Activated CD4-positive, alpha-beta T cell treated with anti-CD3 and anti-CD28 coated beads for 36 hours (primary cell): ENCODE measurements at regions of chr12 and their contacts with region 1.

Region 1: GRCh38 chr12:47742253-47742825 is 16.3 kb downstream of the RAPGEF3 start:
- DNase-seq: peak; percentile 88
- ATAC-seq: peak; percentile 59
- H3K4me3 Mint-ChIP-seq: no peak overlapping the region
- H3K27ac Mint-ChIP-seq: no peak overlapping the region
- H3K4me1 Mint-ChIP-seq: peaks cover 17% of the 10 kb centered on the region
- H3K27me3 Mint-ChIP-seq: peaks cover 2% of the 10 kb centered on the region

Region 2: DNA sequence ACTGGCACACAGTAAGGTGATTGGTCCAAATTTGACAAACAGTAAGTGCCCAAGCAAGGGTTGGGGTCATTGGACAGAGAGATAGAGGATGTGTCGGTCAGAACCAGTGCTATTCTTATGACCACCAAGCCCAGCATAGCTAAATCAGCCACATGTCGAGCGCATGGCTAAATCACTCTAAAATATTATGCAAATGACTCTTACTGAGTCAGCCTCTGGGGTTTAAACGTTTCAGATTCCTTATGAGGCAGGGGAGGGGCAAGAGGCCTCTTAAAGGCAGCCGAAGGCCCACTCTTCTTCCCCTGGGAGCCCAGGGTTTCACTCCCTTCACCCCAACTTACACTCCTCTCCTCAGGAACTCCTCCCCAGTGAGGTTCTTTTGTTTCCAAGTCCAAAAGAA is 16.4 kb before region 1 on chr12:
- CTCF ChIA-PET with region 1: interaction called, 63 read pairs
- POLR2A ChIA-PET with region 1: no interaction called
- intact Hi-C with region 1: no loop called
- DNase-seq: peak; percentile 28
- ATAC-seq: peak; percentile 79
- H3K4me3 Mint-ChIP-seq: no peak overlapping the region
- H3K27ac Mint-ChIP-seq: no peak overlapping the region
- H3K4me1 Mint-ChIP-seq: peaks cover 18% of the 10 kb centered on the region
- H3K27me3 Mint-ChIP-seq: no peaks in the 10 kb centered on the region

Region 3: GRCh38 chr12:47767216-47767724 is 24.9 kb after region 1 on chr12:
- CTCF ChIA-PET with region 1: interaction called, 449 read pairs
- POLR2A ChIA-PET with region 1: interaction called, 3 read pairs
- intact Hi-C with region 1: loop called (anchors 1 kb)
- DNase-seq: peak; percentile 88
- ATAC-seq: peak; percentile 89
- H3K4me3 Mint-ChIP-seq: no peak overlapping the region
- H3K27ac Mint-ChIP-seq: no peak overlapping the region
- H3K4me1 Mint-ChIP-seq: no peaks in the 10 kb centered on the region
- H3K27me3 Mint-ChIP-seq: peaks cover 4% of the 10 kb centered on the region

Region 4: GRCh38 chr12:47797441-47797840 is 55.1 kb after region 1 on chr12:
- CTCF ChIA-PET with region 1: interaction called, 16 read pairs
- POLR2A ChIA-PET with region 1: no interaction called
- intact Hi-C with region 1: no loop called
- DNase-seq: peak; percentile 57
- ATAC-seq: peak; percentile 44
- H3K4me3 Mint-ChIP-seq: no peak overlapping the region
- H3K27ac Mint-ChIP-seq: peak overlapping the region; percentile 42
- H3K4me1 Mint-ChIP-seq: peaks cover 35% of the 10 kb centered on the region
- H3K27me3 Mint-ChIP-seq: no peaks in the 10 kb centered on the region